Naive thymus-derived CD4-positive, alpha-beta T cell (primary cell): ENCODE measurements at regions of chr19 and their contacts with region 1.

Region 1: GRCh38 chr19:44164673-44165512 is at the start of gene ZNF226:
- DNase-seq: peak; percentile 24 to 83 (median 75)
- ATAC-seq: peak; percentile 97
- H3K4me3 ChIP-seq: peak within 1 kb of the TSS; percentile 87
- H3K4me3 Mint-ChIP-seq: peak within 1 kb of the TSS; percentile 97 to 99 (median 98)
- H3K27ac ChIP-seq: peak within 1 kb of the TSS; percentile 78
- H3K27ac Mint-ChIP-seq: peak within 1 kb of the TSS; percentile 84 to 99 (median 97)
- H3K4me1 ChIP-seq: peaks cover 6 to 9% of the 10 kb centered on the region in 2 donors
- H3K4me1 Mint-ChIP-seq: peaks cover 10 to 40% (median 40%) of the 10 kb centered on the region in 7 donors
- H3K27me3 ChIP-seq: no peaks in the 10 kb centered on the region
- H3K27me3 Mint-ChIP-seq: no peaks in the 10 kb centered on the region
- total RNA-seq, gene ZNF226: 14.0 to 59.9 (median 20.3) TPM

Region 2: DNA sequence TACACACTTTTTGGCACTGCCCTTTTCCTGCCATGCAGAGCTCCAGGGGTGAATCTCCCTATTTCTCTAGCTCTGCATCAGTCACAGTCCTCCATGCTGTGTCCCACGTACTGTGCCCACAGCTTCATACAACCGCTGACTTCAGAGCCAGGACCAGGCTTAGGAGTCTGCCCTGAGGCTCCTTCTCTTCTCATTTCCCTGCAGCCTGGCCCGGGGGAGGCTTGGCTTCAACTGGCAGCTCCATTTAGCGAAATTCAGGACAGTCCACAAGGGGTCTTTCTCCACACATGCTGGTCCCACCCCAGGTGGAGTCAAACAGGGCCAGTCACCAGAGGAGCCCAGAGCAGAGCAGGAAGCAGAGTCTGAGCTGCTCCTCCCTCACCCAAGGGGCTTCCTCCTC is 1094.0 kb before region 1 on chr19:
- CTCF ChIA-PET with region 1: no interaction called
- POLR2A ChIA-PET with region 1: no interaction called
- intact Hi-C with region 1: no loop called
- DNase-seq: no peak
- ATAC-seq: no peak
- H3K4me3 ChIP-seq: no peak overlapping the region
- H3K4me3 Mint-ChIP-seq: no peak overlapping the region
- H3K27ac ChIP-seq: no peak overlapping the region
- H3K27ac Mint-ChIP-seq: no peak overlapping the region
- H3K4me1 ChIP-seq: no peaks in the 10 kb centered on the region
- H3K4me1 Mint-ChIP-seq: no peaks in the 10 kb centered on the region
- H3K27me3 ChIP-seq: no peaks in the 10 kb centered on the region
- H3K27me3 Mint-ChIP-seq: peaks cover 0 to 65% (median 34%) of the 10 kb centered on the region in 5 donors

Region 3: GRCh38 chr19:44141191-44142058 is 23.5 kb before region 1 on chr19 and contains the start of gene ZNF234:
- CTCF ChIA-PET with region 1: no interaction called
- POLR2A ChIA-PET with region 1: interaction called, 9 read pairs
- intact Hi-C with region 1: loop called (anchors 1 kb)
- DNase-seq: peak; percentile 29 to 69 (median 56)
- ATAC-seq: peak; percentile 92
- H3K4me3 ChIP-seq: peak within 1 kb of the TSS; percentile 80
- H3K4me3 Mint-ChIP-seq: peak within 1 kb of the TSS; percentile 90 to 97 (median 96)
- H3K27ac ChIP-seq: peak within 1 kb of the TSS; percentile 77
- H3K27ac Mint-ChIP-seq: peak within 1 kb of the TSS; percentile 64 to 94 (median 88)
- H3K4me1 ChIP-seq: peaks cover 0 to 12% of the 10 kb centered on the region in 2 donors
- H3K4me1 Mint-ChIP-seq: peaks cover 14 to 30% (median 25%) of the 10 kb centered on the region in 7 donors
- H3K27me3 ChIP-seq: no peaks in the 10 kb centered on the region
- H3K27me3 Mint-ChIP-seq: no peaks in the 10 kb centered on the region
- total RNA-seq, gene ZNF234: 2.8 to 25.2 (median 13.4) TPM

Region 4: GRCh38 chr19:44149776-44150175 is 15.1 kb before region 1 on chr19:
- CTCF ChIA-PET with region 1: no interaction called
- POLR2A ChIA-PET with region 1: interaction called, 10 read pairs
- intact Hi-C with region 1: no loop called
- DNase-seq: no peak
- ATAC-seq: no peak
- H3K4me3 ChIP-seq: no peak overlapping the region
- H3K4me3 Mint-ChIP-seq: no peak overlapping the region
- H3K27ac ChIP-seq: no peak overlapping the region
- H3K27ac Mint-ChIP-seq: no peak overlapping the region
- H3K4me1 ChIP-seq: no peaks in the 10 kb centered on the region
- H3K4me1 Mint-ChIP-seq: peaks cover 0 to under 1% (median 0%) of the 10 kb centered on the region in 7 donors
- H3K27me3 ChIP-seq: no peaks in the 10 kb centered on the region
- H3K27me3 Mint-ChIP-seq: no peaks in the 10 kb centered on the region

Region 5: GRCh38 chr19:44207126-44207803 is 42.4 kb after region 1 on chr19:
- CTCF ChIA-PET with region 1: interaction called, 8 read pairs
- POLR2A ChIA-PET with region 1: interaction called, 12 read pairs
- intact Hi-C with region 1: loop called (anchors 1 kb)
- DNase-seq: peak; percentile 25 to 78 (median 70)
- ATAC-seq: peak; percentile 97
- H3K4me3 ChIP-seq: peak overlapping the region; percentile 79
- H3K4me3 Mint-ChIP-seq: peak overlapping the region; percentile 81 to 95 (median 87)
- H3K27ac ChIP-seq: peak overlapping the region; percentile 75
- H3K27ac Mint-ChIP-seq: peak overlapping the region; percentile 79 to 93 (median 84)
- H3K4me1 ChIP-seq: peaks cover 0 to 11% of the 10 kb centered on the region in 2 donors
- H3K4me1 Mint-ChIP-seq: peaks cover 7 to 15% (median 11%) of the 10 kb centered on the region in 7 donors
- H3K27me3 ChIP-seq: no peaks in the 10 kb centered on the region
- H3K27me3 Mint-ChIP-seq: peaks cover 0 to 22% (median 16%) of the 10 kb centered on the region in 5 donors

Region 6: GRCh38 chr19:44282846-44283245 is 118.0 kb after region 1 on chr19:
- CTCF ChIA-PET with region 1: no interaction called
- POLR2A ChIA-PET with region 1: no interaction called
- intact Hi-C with region 1: no loop called
- DNase-seq: no peak
- ATAC-seq: no peak
- H3K4me3 ChIP-seq: no peak overlapping the region
- H3K4me3 Mint-ChIP-seq: no peak overlapping the region
- H3K27ac ChIP-seq: no peak overlapping the region
- H3K27ac Mint-ChIP-seq: no peak overlapping the region
- H3K4me1 ChIP-seq: no peaks in the 10 kb centered on the region
- H3K4me1 Mint-ChIP-seq: no peaks in the 10 kb centered on the region
- H3K27me3 ChIP-seq: no peaks in the 10 kb centered on the region
- H3K27me3 Mint-ChIP-seq: no peaks in the 10 kb centered on the region

Region 7: DNA sequence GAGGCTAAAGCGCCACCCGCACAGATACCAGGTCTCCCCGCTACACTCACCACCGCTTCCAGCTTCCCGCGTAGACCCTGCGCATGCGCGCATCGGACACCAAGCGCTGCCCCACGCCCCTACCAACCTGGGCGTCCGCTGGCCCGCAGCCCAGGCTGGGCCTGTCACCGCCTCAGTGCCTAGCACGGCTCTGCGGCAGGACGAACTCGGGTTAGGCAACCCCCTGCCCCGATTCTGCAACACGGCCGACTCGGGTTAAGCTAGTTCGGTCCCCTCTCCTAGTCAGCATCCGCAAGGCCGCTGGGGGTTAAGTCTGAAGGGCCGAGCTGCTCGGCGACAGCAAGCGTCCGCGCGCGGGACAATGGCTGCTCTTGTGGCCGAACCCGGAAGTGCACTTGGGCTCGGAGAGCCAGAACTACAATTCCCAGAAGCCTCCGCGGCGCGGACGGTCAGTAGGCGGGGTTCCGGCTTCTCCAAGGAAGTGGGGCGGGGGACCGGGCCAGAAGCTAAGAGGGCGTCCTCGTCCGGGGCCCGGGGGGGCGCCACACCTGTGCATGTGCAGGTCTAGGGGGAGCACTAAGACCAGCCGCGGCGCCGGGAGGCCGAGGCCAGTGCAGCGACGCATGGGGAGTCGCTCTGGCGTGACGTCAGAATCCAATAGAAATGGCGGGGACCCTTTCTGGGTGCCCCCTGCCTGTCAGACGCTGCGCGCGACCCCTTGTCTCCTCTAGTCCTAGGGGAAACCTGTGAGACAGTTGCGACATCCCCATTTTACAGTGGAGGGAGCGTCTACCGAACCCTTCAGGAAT is 335.5 kb after region 1 on chr19 and contains the start of gene ZNF180:
- CTCF ChIA-PET with region 1: interaction called, 3 read pairs
- POLR2A ChIA-PET with region 1: interaction called, 6 read pairs
- intact Hi-C with region 1: loop called in 1 of 2 experiments (anchors 1 kb)
- DNase-seq: peak; percentile 89 to 96 (median 93)
- ATAC-seq: peak; percentile 96
- H3K4me3 ChIP-seq: peak within 1 kb of the TSS; percentile 100
- H3K4me3 Mint-ChIP-seq: peak within 1 kb of the TSS; percentile 91 to 98 (median 96)
- H3K27ac ChIP-seq: peak within 1 kb of the TSS; percentile 84
- H3K27ac Mint-ChIP-seq: peak within 1 kb of the TSS; percentile 82 to 94 (median 92)
- H3K4me1 ChIP-seq: peaks cover 13 to 19% of the 10 kb centered on the region in 2 donors
- H3K4me1 Mint-ChIP-seq: peaks cover 29 to 45% (median 34%) of the 10 kb centered on the region in 7 donors
- H3K27me3 ChIP-seq: peaks cover 0 to 2% of the 10 kb centered on the region in 2 donors
- H3K27me3 Mint-ChIP-seq: peaks cover 7 to 18% (median 13%) of the 10 kb centered on the region in 5 donors
- total RNA-seq, gene ZNF180: 7.5 to 17.7 (median 10.6) TPM